Natural killer cell (primary cell): ENCODE measurements at regions of chr10 and their contacts with region 1.

Region 1: DNA sequence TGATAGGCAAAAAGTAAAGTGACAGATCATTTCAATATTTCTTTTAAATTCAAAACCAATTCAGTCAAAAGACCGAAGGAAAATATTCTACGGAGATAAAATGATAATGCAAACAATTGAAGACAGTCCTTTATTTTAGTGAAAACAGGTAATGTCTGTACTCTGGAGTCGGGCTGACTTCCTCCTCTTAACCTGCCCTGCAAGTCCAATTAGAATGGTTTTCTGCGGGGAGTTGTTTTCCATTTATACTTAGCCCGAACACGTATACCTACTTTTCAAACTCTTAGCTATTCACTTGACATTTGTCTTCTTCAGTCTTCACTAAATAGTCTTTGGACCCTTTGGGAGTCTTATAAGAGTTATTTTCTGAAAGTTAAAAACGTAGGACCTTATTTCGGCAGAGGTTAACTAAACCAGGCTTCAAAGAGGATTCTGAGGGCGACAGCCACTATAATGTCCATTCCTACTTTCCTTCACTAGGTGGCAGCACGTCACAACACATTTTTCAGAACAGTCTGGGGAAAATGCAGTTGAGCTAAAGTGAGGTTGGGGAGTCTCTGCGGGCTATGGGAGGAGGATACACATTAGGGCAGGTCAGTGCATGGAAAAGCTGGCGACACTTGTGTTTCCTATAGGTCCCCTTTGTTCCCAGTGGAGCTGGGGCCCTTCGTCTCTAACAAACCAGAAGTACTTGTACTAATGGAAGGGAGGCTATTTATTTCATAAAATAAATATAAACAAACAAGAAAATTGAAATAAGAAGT is 472.0 kb downstream of the KCNMA1 start:
- DNase-seq: peak in 1 of 2 donors; percentile 64
- ATAC-seq: peak; percentile 58 to 83 (median 77)
- H3K4me3 ChIP-seq: no peak overlapping the region
- H3K4me3 Mint-ChIP-seq: peak overlapping the region; percentile 77
- H3K27ac ChIP-seq: no peak overlapping the region
- H3K27ac Mint-ChIP-seq: no peak overlapping the region
- H3K4me1 ChIP-seq: peaks cover 3% of the 10 kb centered on the region
- H3K4me1 Mint-ChIP-seq: peaks cover 5 to 6% of the 10 kb centered on the region in 2 donors
- H3K27me3 ChIP-seq: no peaks in the 10 kb centered on the region
- H3K27me3 Mint-ChIP-seq: peaks cover 24 to 55% of the 10 kb centered on the region in 2 donors
- CTCF ChIP-seq: peak; percentile 90

Region 2: DNA sequence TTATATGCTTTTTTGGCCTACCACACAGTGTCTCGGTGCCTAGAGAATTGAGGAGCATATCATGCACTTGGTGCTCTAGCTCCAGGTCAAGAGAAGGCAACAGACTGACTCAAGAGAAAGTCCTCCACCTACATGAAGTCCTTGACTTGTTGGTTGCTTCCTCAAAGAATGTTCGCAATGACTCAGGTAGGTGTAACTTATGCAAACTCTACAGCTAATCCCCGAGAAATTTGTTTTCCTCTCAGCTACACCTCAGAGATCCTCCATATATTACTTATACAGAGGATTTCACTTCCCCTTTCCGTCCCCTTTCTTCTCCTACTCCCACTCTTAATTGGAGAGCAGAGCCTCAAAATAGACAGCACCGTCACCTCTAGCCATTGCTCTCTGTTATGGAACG is 541.2 kb before region 1 on chr10:
- intact Hi-C with region 1: no loop called
- DNase-seq: no peak
- ATAC-seq: no peak
- H3K4me3 ChIP-seq: no peak overlapping the region
- H3K4me3 Mint-ChIP-seq: no peak overlapping the region
- H3K27ac ChIP-seq: no peak overlapping the region
- H3K27ac Mint-ChIP-seq: no peak overlapping the region
- H3K4me1 ChIP-seq: no peaks in the 10 kb centered on the region
- H3K4me1 Mint-ChIP-seq: no peaks in the 10 kb centered on the region
- H3K27me3 ChIP-seq: no peaks in the 10 kb centered on the region
- H3K27me3 Mint-ChIP-seq: peaks cover 0 to 4% of the 10 kb centered on the region in 2 donors
- CTCF ChIP-seq: no peak

Region 3: DNA sequence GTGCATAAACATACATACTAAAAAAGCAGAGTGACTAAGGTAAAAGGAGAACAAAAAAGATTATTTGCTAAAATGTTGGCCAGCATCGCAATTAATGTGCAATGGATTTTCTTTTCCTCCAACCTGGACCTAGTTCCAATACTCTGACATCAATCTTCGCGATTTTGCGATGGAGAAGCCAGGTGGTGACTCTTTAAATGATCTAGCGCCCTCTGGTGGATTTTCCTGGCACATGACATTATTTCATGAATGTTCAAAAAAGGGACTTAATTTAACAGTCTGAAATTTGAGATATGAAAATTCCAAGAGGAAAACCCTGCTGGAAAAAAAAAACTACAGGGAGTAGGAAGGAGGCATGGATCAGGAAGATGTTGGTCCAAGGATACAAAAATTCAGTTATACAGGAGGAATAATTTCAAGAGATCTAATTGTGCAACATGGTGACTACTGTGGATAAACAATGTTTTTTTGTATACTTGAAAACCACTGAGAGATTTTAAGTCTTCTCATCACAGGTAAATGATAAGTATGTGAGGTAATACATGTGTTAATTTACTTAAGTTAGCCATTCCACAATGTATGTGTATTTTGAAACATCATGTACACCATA is 476.3 kb after region 1 on chr10:
- intact Hi-C with region 1: loop called (anchors 2 kb)
- DNase-seq: peak in 1 of 2 donors; percentile 75
- ATAC-seq: no peak
- H3K4me3 ChIP-seq: no peak overlapping the region
- H3K4me3 Mint-ChIP-seq: no peak overlapping the region
- H3K27ac ChIP-seq: no peak overlapping the region
- H3K27ac Mint-ChIP-seq: no peak overlapping the region
- H3K4me1 ChIP-seq: no peaks in the 10 kb centered on the region
- H3K4me1 Mint-ChIP-seq: peaks cover 5 to 6% of the 10 kb centered on the region in 2 donors
- H3K27me3 ChIP-seq: peaks cover 10% of the 10 kb centered on the region
- H3K27me3 Mint-ChIP-seq: peaks cover 38 to 51% of the 10 kb centered on the region in 2 donors
- CTCF ChIP-seq: peak; percentile 94

Region 4: DNA sequence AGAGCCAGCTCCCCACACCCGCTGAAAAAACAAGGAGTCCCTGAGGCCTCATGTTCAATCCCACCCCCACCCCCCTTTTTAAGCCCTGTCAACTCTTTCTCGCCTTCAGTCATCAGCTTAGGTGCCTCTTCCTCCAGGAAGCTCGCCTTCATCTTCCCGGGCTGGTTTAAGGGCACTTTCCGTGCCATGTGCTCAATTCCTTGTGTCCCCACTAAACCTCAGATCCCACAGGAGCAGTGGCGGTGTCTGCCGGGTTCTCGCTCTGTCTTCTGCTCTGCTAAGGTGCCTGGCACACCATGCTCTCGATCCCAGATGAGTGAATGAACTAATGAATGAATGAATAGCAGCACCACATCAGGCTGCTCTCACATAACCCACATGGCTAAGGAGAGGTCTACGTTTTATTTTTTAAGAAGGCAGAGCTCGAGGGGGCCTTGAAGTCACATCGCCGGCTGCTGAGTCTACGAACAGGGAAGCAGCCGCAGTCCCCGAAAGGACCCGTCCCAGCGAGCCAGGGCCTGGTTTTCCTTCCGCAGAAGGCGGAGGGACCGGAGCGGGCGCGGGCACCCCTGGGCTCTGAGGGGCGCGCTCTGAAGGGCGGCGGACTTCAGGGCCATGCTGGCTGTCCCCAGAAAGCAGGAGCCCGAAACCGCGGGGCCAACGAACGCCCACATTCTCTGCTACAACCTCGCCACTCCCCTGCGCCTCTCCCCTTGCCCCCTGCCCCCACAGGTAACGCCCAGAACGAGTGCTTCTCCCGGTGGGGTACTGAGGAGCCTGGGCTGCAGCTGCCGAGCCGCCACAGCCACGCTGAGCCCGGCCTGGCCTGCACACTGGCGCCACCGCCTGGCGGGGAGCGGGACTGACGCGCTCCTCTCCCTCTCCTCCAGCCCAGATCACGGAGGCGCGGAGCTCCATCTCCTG is 545.4 kb after region 1 on chr10:
- intact Hi-C with region 1: loop called (anchors 1 kb)
- DNase-seq: peak; percentile 74 to 80
- ATAC-seq: peak; percentile 95 to 99 (median 99)
- H3K4me3 ChIP-seq: no peak overlapping the region
- H3K4me3 Mint-ChIP-seq: peak overlapping the region; percentile 75
- H3K27ac ChIP-seq: no peak overlapping the region
- H3K27ac Mint-ChIP-seq: no peak overlapping the region
- H3K4me1 ChIP-seq: peaks cover 18% of the 10 kb centered on the region
- H3K4me1 Mint-ChIP-seq: peaks cover 6 to 12% of the 10 kb centered on the region in 2 donors
- H3K27me3 ChIP-seq: peaks cover 14% of the 10 kb centered on the region
- H3K27me3 Mint-ChIP-seq: peaks cover 28 to 31% of the 10 kb centered on the region in 2 donors
- CTCF ChIP-seq: peak; percentile 91

Region 5: DNA sequence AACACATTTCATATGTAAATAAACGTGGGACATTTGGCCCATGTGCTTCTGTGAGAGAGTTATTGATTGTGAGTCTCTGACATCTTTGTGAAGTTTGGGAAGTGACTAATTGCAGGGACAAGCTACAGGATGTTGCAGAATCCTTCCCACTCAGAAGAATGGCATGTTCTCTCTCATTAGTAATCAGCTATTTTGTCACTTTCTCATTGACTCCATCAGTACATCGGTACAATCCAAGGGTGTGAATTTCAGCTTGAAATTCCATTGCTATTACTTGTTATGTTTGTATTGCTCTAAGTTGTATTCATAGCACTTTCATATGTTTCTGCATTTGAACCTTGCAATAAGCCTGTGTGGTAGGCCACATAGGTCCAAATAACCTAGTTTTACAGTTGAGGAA is 572.0 kb after region 1 on chr10:
- intact Hi-C with region 1: no loop called
- DNase-seq: no peak
- ATAC-seq: no peak
- H3K4me3 ChIP-seq: no peak overlapping the region
- H3K4me3 Mint-ChIP-seq: no peak overlapping the region
- H3K27ac ChIP-seq: no peak overlapping the region
- H3K27ac Mint-ChIP-seq: no peak overlapping the region
- H3K4me1 ChIP-seq: no peaks in the 10 kb centered on the region
- H3K4me1 Mint-ChIP-seq: no peaks in the 10 kb centered on the region
- H3K27me3 ChIP-seq: no peaks in the 10 kb centered on the region
- H3K27me3 Mint-ChIP-seq: peaks cover 0 to 13% of the 10 kb centered on the region in 2 donors
- CTCF ChIP-seq: no peak